ENCODE measurements at regions of chr12 and their contacts with region 1.

Region 1: DNA sequence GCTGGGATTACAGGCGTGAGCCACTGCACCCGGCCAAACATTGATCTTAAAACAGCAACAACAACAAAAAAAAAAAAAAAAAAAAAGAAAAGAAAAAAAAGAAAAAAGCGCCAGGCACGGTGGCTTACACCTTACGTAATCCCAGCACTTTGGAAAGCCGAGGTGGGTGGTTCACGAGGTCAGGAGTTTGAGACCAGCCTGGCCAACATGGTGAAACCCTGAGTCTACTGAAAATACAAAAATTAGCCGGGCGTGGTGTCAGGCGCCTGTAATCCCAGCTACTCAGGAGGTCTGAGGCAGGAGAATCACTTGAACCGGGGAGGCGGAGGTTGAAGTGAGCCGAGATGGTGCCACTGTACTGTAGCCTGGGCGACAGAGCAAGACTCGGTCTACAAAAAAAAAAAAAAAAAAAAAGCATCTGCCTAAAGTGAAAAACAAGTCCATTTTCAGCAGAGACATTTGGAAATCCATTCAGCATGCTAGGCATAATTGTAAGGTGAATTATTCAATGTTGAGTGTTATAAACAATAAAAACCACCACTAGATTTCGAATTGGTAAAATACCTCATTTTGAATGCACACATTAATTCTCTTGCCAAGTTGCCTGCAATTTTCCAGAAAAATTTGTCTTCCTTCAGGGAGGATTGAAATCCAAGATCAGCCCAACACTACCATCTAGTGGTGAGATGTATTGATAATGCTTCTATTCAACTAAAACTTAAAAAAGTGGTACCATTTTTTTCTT is 8.0 kb upstream of the CERS5 start:
- DNase-seq: peak; percentile 81
- H3K4me3 Mint-ChIP-seq: no peak overlapping the region
- H3K27ac Mint-ChIP-seq: no peak overlapping the region
- H3K4me1 Mint-ChIP-seq: no peaks in the 10 kb centered on the region
- H3K27me3 Mint-ChIP-seq: no peaks in the 10 kb centered on the region
- CTCF ChIP-seq: peak; percentile 64

Region 2: DNA sequence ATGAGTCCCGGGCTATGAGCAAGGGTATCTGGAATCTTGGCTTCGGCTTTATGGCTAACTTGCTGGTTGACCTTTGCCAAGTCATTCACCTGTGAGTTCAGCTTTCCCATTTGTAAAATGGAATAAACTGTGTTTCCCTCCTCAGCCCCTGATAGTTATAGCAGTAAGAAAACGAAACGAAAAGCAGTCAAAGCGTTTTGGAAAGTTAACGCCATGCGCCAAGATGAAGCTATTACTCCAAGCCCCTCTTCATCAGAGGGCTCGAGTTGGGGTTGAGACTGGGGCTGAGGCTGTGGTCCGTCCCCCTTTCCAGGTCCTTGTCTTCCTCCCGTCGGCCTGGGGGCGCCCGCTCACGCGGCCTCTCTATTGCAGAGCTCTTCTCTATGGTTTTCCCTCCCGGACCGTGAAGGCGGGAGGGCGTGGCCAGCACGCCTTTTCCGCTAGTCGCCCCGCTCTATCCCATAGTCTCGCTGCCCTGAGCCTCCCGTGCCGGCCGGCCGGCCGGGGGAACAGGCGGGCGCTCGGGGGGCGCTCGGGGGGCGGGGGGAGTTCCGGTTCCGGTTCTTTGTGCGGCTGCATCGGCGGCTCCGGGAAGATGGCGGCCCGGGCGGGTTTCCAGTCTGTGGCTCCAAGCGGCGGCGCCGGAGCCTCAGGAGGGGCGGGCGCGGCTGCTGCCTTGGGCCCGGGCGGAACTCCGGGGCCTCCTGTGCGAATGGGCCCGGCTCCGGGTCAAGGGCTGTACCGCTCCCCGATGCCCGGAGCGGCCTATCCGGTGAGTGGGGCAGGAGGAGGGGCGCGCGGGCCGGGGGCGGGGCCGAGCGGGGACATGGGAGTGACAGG is 90.1 kb before region 1 on chr12 and contains the start of gene SMARCD1:
- CTCF ChIA-PET with region 1: interaction called, 33 read pairs
- POLR2A ChIA-PET with region 1: interaction called, 7 read pairs
- intact Hi-C with region 1: no loop called
- DNase-seq: peak; percentile 90
- H3K4me3 Mint-ChIP-seq: peak within 1 kb of the TSS; percentile 87
- H3K27ac Mint-ChIP-seq: peak within 1 kb of the TSS; percentile 90
- H3K4me1 Mint-ChIP-seq: peaks cover 33% of the 10 kb centered on the region
- H3K27me3 Mint-ChIP-seq: no peaks in the 10 kb centered on the region
- CTCF ChIP-seq: no peak
- total RNA-seq, gene SMARCD1: 57.4 and 58.7 TPM in 2 replicates

Region 3: DNA sequence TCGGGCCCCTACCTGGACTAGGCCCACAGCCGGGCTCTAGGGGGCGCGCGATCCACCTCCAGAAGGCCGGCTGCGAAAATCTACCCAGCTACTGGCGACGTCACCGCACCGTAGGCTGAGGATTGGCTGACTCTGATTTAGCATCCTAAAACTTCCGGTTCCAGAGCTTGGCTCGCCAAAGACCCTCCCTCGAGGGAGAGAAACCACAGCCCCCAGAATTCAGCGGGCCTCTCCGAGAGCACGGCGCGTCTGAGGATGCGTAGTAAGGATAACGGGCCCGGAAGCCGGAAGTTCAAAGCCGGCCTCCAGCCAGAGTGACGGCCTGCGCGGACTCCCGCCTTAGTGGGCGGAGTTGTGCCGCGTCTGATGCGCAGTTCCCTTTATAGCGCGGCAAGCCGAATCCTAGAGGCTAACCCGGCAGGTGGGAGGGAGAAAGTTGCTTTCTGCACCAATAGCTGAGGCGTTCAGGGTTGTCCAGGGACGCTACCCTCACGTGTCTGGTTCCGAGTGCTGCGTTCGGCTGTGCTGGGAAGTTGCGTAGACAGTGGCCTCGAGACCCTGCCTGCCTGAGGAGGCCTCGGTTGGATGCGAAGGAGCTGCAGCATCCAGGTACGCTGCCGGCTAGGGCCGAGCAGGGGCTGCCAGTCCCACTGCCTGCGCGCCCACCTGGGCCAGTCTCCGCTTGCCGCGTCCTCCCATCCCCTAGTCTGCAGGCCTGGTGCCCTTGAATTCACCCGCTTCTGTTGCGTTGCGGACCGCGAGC is 63.3 kb before region 1 on chr12 and contains the start of gene COX14:
- CTCF ChIA-PET with region 1: interaction called, 17 read pairs
- POLR2A ChIA-PET with region 1: interaction called, 17 read pairs
- intact Hi-C with region 1: no loop called
- DNase-seq: peak; percentile 99
- H3K4me3 Mint-ChIP-seq: peak within 1 kb of the TSS; percentile 99
- H3K27ac Mint-ChIP-seq: peak within 1 kb of the TSS; percentile 93
- H3K4me1 Mint-ChIP-seq: peaks cover 12% of the 10 kb centered on the region
- H3K27me3 Mint-ChIP-seq: no peaks in the 10 kb centered on the region
- CTCF ChIP-seq: peak; percentile 80
- total RNA-seq, gene COX14: 43.6 and 45.2 TPM in 2 replicates

Region 4: DNA sequence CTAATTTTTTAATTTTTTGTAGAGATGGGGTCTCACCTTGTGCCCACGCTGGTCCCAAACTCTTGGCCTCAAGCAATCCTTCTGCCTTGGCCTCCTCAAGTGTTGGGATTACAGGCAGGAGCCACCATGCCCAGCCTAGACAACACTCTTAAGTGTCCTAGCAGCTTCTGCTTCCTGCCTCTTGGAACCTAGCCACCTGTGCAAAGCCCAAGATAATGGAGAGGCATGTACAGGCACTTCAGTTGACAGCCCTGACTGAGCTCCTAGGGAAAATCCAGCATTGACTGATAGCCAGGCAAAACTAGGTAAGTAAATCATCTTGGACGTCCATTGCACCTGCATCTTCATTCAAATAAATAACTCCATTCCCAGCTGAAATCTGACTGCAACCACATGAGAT is 47.6 kb before region 1 on chr12:
- CTCF ChIA-PET with region 1: interaction called, 34 read pairs
- POLR2A ChIA-PET with region 1: interaction called, 8 read pairs
- intact Hi-C with region 1: loop called (anchors 1 kb)
- DNase-seq: no peak
- H3K4me3 Mint-ChIP-seq: no peak overlapping the region
- H3K27ac Mint-ChIP-seq: no peak overlapping the region
- H3K4me1 Mint-ChIP-seq: peaks cover under 1% of the 10 kb centered on the region
- H3K27me3 Mint-ChIP-seq: no peaks in the 10 kb centered on the region
- CTCF ChIP-seq: no peak

Region 5: DNA sequence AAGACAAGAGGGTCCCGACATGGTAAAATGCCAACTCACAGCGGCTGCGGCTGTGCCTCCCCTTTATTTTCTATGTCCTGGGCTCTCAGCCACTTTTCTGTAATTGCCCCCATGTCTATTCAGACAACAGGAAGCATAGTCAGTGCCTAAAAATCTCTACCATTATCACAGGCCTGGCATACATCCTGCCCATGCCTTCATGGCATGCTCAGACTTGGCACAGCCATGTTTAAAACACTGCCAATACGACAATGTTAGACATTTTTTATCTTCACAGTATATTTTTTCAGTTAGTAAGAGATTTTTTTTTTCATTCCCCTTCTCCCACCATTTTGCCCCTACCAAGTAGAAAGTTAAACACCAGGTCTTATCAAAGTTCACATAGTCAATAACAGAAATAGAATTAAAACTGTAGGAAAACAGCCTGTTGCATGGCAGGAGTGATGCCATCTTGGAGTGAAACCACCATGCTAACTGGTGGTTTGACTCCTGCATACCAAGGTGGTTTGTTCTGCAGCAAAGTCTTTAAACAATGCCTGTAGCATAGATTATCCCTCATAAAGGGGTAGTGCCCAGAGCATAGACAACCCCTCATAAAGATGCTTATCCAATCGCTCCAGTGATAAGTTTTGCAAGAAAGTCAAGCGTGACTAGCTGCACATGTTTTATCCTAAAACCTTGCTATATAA is 11.0 kb after region 1 on chr12:
- CTCF ChIA-PET with region 1: interaction called, 13 read pairs
- POLR2A ChIA-PET with region 1: interaction called, 4 read pairs
- intact Hi-C with region 1: no loop called
- DNase-seq: peak; percentile 22
- H3K4me3 Mint-ChIP-seq: no peak overlapping the region
- H3K27ac Mint-ChIP-seq: peak overlapping the region; percentile 68
- H3K4me1 Mint-ChIP-seq: peaks cover 33% of the 10 kb centered on the region
- H3K27me3 Mint-ChIP-seq: no peaks in the 10 kb centered on the region
- CTCF ChIP-seq: no peak

Region 6: GRCh38 chr12:50314629-50315312 is 139.6 kb after region 1 on chr12:
- CTCF ChIA-PET with region 1: interaction called, 14 read pairs
- POLR2A ChIA-PET with region 1: interaction called, 3 read pairs
- intact Hi-C with region 1: no loop called
- DNase-seq: peak; percentile 39
- H3K4me3 Mint-ChIP-seq: no peak overlapping the region
- H3K27ac Mint-ChIP-seq: no peak overlapping the region
- H3K4me1 Mint-ChIP-seq: peaks cover 5% of the 10 kb centered on the region
- H3K27me3 Mint-ChIP-seq: no peaks in the 10 kb centered on the region
- CTCF ChIP-seq: peak; percentile 58

Region 7: DNA sequence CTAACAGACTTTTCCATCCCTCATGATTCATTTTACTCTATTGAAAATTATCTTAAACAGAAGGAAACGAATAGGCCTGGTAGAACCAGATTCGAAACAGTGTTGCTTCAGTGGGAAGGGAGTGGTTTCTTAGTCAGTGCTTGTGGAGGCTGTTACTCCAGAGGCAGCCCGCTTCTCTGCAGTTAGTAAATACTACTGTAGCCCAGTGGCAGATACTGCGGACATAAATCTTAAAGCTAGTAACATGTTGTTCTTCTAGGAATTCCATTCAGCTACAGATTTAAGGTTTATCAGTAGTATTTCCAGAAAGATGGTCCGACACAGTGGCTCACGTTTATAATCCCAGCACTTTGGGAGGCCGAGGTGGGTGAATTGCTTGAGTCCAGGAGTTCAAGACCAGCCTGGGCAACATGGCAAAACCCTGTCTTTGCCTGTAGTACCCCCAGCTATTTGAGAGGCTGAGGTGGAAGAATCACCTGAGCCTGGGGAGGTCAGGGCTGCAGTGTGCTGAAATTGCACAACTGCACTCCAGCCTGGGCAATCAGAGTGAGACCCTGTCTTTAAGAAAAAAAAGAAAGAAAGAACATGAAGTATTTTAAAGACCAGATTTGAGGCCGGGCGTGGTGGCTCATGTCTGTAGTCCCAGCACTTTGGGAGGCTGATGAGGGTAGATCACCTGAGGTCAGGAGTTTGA is 375.5 kb after region 1 on chr12:
- CTCF ChIA-PET with region 1: no interaction called
- POLR2A ChIA-PET with region 1: no interaction called
- intact Hi-C with region 1: no loop called
- DNase-seq: peak; percentile 33
- H3K4me3 Mint-ChIP-seq: no peak overlapping the region
- H3K27ac Mint-ChIP-seq: peak overlapping the region; percentile 57
- H3K4me1 Mint-ChIP-seq: peaks cover 13% of the 10 kb centered on the region
- H3K27me3 Mint-ChIP-seq: no peaks in the 10 kb centered on the region
- CTCF ChIP-seq: no peak